Gastrocnemius medialis (tissue), 4 donors: ENCODE measurements at regions of chr16 and their contacts with region 1.

Region 1: DNA sequence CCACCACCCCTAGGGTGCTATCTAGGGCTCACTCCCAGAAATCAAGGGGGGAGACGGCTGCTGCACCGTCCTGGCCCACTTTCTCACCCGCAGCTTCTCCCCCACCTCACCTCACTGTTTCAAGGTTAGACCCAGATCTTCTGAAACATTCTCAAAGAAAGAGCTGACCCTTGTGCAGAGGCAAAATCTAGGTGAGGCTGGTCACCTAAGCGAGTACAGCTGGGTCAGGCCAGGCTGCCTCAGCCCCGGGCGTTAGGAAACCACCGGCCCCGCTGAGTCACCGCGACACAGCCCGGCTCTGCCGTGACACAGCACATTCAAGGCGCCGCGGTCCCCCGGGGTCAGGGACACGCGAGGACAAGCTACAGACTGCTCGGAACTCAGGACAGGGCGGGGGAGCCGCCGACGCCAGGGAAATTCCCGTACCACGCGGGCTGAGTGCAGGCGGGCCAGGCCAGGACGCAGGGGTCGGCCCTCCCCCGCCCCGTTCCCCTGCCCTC is 27.1 kb downstream of the GNPTG start:
- DNase-seq: peak; percentile 87 to 96
- ATAC-seq: peak; percentile 83
- H3K4me3 ChIP-seq: peak overlapping the region; percentile 64 to 77 (median 70)
- H3K27ac ChIP-seq: peak overlapping the region; percentile 95 to 98 (median 98)
- H3K4me1 ChIP-seq: peaks cover 10 to 20% of the 10 kb centered on the region in 2 donors
- H3K27me3 ChIP-seq: no peaks in the 10 kb centered on the region
- CTCF ChIP-seq: no peak
- POLR2A ChIP-seq: no peak

Region 2: GRCh38 chr16:1296688-1297412 is 82.0 kb before region 1 on chr16:
- in situ Hi-C with region 1: no loop called
- intact Hi-C with region 1: loop called (anchors 1 kb)
- DNase-seq: peak; percentile 61 to 75
- ATAC-seq: peak; percentile 93
- H3K4me3 ChIP-seq: no peak overlapping the region
- H3K27ac ChIP-seq: peak overlapping the region; percentile 66 to 82 (median 70)
- H3K4me1 ChIP-seq: peaks cover 10 to 15% of the 10 kb centered on the region in 2 donors
- H3K27me3 ChIP-seq: peaks cover 28 to 46% (median 42%) of the 10 kb centered on the region in 3 donors
- CTCF ChIP-seq: no peak
- POLR2A ChIP-seq: peak in 1 of 2 donors; percentile 26

Region 3: DNA sequence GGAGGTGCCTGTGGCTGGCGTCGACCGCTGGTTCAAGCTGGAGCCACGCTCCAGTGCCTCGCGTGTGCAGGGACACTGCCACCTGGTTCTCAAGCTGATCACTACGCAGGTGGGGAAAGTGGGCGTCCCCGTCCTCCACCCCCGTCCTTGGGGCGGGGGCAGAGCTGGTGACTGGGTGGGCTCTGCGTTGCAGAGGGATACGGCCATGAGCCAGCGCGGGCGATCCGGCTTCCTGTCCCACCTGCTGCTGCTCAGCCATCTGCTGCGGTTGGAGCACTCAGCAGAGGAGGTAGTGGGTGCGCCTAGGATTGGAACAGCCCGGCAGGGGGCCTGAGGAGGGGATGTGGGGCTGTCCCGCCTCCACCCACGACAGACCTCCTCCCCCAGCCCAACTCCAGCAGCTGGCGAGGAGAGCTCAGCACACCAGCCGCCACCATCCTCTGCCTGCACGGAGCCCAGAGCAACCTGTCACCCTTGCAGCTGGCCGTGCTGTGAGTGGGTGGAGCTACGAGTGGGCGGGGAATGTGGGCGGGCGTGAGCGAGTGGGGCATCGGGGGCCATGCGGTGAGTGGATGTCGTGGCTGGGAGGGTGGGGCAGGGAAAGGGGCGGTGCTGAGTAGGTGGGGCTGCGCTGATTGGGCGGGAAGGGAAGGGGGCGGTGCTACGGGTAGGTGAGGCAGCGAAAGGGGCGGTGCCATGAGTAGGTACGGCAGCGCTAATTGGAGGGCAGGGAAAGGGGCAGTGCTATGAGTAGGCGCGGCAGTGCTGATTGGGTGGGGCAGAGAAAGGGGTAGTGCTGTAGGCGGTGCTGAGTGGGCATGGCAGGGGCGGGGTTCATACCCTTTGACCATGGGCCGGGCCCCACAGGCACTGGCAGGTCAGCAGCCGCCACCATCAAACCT is 36.1 kb before region 1 on chr16:
- in situ Hi-C with region 1: no loop called
- intact Hi-C with region 1: loop called (anchors 1 kb)
- DNase-seq: peak; percentile 95 to 98
- ATAC-seq: peak; percentile 97 to 98
- H3K4me3 ChIP-seq: peak overlapping the region; percentile 35 to 49 (median 46)
- H3K27ac ChIP-seq: peak overlapping the region in 1 of 4 donors; percentile 46
- H3K4me1 ChIP-seq: peaks cover 4 to 12% of the 10 kb centered on the region in 2 donors
- H3K27me3 ChIP-seq: no peaks in the 10 kb centered on the region
- CTCF ChIP-seq: no peak
- POLR2A ChIP-seq: no peak

Region 4: GRCh38 chr16:1363501-1364041 is 15.3 kb before region 1 on chr16:
- in situ Hi-C with region 1: no loop called
- intact Hi-C with region 1: loop called (anchors 1 kb)
- DNase-seq: peak; percentile 25 to 68
- ATAC-seq: peak; percentile 65 to 86
- H3K4me3 ChIP-seq: no peak overlapping the region
- H3K27ac ChIP-seq: peak overlapping the region in 3 of 4 donors; percentile 3 to 55 (median 25)
- H3K4me1 ChIP-seq: no peaks in the 10 kb centered on the region
- H3K27me3 ChIP-seq: no peaks in the 10 kb centered on the region
- CTCF ChIP-seq: peak; percentile 66 to 84 (median 82)
- POLR2A ChIP-seq: no peak

Region 5: GRCh38 chr16:1408171-1408837 is 29.4 kb after region 1 on chr16:
- in situ Hi-C with region 1: no loop called
- intact Hi-C with region 1: loop called (anchors 2 kb)
- DNase-seq: peak; percentile 84 to 91
- ATAC-seq: peak; percentile 90 to 94
- H3K4me3 ChIP-seq: peak overlapping the region; percentile 49 to 66 (median 59)
- H3K27ac ChIP-seq: peak overlapping the region; percentile 51 to 75 (median 66)
- H3K4me1 ChIP-seq: peaks cover 7 to 18% of the 10 kb centered on the region in 2 donors
- H3K27me3 ChIP-seq: no peaks in the 10 kb centered on the region
- CTCF ChIP-seq: no peak
- POLR2A ChIP-seq: no peak